ENCODE measurements at regions of chr5 and their contacts with region 1.

Region 1: DNA sequence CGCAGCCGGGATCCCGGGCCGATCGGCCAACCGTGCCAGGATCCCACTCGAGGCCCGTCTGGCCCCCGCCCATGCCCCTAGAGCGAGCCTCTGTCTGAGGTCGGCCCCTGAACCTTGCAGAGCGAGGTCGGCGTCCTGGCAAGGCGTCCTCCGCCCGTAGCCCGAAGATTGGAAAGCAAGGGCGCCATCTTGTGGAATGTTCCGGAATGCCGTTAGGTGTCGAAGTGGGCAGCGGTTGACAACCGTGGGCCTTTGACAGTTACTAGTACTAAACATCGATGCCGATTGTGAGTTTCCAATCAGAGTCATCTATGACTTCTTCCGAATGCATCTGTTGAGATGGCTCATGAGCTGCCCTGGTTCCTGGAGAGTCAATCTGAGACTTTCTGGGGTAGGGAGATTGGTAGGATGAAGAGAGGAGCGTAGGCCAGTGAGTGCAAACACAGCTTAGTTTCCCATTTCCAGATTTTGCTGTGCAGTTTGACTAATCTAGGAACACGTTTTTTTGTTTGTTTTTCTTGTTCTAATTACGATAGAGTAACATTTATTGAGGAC is 923 bp upstream of the PLK2 start:
- DNase-seq: peak; percentile 88 to 95
- ATAC-seq: peak; percentile 84 to 86 (median 85)
- H3K4me3 ChIP-seq: peak overlapping the region; percentile 86
- H3K27ac ChIP-seq: peak overlapping the region; percentile 95
- H3K4me1 ChIP-seq: peaks cover 3% of the 10 kb centered on the region
- H3K27me3 ChIP-seq: no peaks in the 10 kb centered on the region
- CTCF ChIP-seq: peak; percentile 82

Region 2: GRCh38 chr5:56909294-56910209 is 1551.3 kb before region 1 on chr5 and contains the start of gene SETD9:
- intact Hi-C with region 1: loop called in 1 of 2 experiments (anchors 10 kb)
- DNase-seq: peak; percentile 99
- ATAC-seq: peak; percentile 92 to 96 (median 95)
- H3K4me3 ChIP-seq: peak within 1 kb of the TSS; percentile 82
- H3K27ac ChIP-seq: peak within 1 kb of the TSS; percentile 96
- H3K4me1 ChIP-seq: peaks cover 9% of the 10 kb centered on the region
- H3K27me3 ChIP-seq: no peaks in the 10 kb centered on the region
- CTCF ChIP-seq: no peak
- total RNA-seq, gene SETD9: 4.9 to 16.3 (median 11.0) TPM

Region 3: DNA sequence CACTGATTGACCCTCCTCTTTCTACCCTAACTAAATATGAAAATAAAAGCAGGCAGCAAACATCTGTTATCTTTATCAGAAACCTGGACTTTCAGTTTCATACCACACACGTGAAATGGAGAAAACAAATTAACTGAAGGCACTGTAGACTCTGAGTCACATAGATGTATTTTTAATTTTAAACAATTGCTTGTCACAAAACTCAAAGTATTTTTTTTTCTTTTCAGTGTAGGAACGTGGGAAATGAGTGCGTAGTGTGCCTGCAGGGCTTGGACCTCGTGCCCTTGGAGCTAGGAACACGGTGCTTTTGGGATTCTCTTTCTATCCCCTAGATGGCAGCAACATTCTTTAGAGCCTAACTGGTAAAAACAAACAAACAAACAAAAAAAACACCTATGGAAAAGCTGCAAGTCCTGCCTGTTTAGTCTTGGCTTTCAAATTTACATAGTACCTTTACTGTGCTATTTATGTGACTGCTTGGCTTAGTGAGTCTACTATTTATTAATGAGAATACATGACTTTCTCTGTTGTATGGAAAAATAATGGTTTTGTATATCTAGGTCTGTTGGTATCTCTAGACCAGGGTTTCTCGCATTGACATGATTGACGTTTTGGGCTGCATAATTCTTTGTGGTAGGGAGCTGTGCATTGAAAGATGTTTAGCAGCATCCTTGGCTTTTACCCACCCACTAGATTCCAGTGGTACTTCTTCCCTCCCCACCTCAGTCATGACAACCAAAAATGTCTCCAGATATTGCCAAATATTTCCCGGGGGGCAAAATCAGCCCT is 961.4 kb before region 1 on chr5:
- intact Hi-C with region 1: loop called (anchors 1 to 5 kb)
- DNase-seq: no peak
- ATAC-seq: peak; percentile 49 to 83 (median 64)
- H3K4me3 ChIP-seq: peak overlapping the region; percentile 31
- H3K27ac ChIP-seq: no peak overlapping the region
- H3K4me1 ChIP-seq: peaks cover 13% of the 10 kb centered on the region
- H3K27me3 ChIP-seq: no peaks in the 10 kb centered on the region
- CTCF ChIP-seq: peak; percentile 76

Region 4: DNA sequence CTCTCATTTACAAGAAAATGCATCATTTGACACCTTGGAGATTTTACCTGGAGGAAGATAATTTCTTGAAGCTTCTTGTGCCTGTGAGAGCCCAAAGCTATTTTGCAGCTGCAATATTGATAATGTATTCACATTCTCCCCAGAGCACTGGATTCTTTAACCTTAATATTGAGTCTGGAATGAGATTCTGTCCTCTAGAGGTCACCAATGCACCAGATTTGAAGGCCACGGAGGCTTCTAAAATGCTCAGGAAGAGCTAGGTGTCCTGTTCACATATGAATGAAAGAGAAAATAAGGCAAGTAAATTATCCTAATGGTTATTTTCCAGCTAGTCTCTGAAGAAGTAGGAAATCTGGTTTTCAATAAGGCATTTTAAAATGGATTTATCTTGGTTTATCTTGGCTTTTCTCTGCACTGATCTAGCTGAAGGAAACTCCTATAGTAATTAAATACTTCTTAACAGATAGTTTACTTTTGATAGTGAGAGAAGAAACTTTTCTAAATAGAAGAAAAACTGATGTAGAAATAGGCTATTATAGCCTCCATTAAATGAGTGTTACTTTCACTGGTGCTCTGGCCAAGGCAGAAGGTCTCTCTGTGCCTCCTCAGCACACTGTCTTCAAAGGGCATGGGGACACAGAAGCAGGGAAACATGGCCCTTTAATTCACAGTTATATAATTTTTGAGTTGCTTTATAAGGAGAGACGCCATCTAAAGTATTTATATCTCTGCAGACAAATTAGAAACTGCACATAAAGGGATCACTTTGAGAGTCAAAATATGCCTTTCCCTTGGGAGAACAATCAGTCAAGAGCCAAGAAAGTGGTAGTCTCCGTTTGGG is 681.2 kb before region 1 on chr5:
- intact Hi-C with region 1: loop called (anchors 1 to 2 kb)
- DNase-seq: no peak
- ATAC-seq: peak; percentile 82 to 92 (median 83)
- H3K4me3 ChIP-seq: no peak overlapping the region
- H3K27ac ChIP-seq: no peak overlapping the region
- H3K4me1 ChIP-seq: peaks cover 23% of the 10 kb centered on the region
- H3K27me3 ChIP-seq: no peaks in the 10 kb centered on the region
- CTCF ChIP-seq: peak; percentile 70

Region 5: DNA sequence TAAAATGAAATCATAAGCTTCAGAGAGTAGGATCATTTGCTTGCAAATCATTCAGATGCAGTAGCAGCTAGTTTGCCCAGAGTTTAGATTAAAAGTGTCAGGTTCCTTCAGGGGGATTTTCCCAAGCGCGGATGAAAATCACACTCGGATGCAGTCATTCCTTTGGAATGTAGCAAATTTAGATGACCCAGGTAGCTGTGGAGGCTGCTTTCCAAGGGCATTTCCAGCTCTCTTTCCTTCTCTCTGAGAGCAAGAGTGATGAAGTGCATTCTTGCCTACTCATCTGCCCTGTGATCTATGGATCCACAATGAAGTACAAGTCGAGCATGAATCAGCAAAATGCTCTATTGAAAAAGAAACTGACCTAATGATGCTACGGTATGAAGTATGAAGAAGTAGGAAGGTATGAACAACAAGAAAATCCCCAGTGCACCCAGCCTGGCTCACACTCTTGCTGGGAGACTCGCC is 201.1 kb before region 1 on chr5:
- intact Hi-C with region 1: loop called (anchors 10 kb)
- DNase-seq: no peak
- ATAC-seq: peak in 2 of 4 donors; percentile 59 to 73
- H3K4me3 ChIP-seq: no peak overlapping the region
- H3K27ac ChIP-seq: peak overlapping the region; percentile 5
- H3K4me1 ChIP-seq: peaks cover 5% of the 10 kb centered on the region
- H3K27me3 ChIP-seq: no peaks in the 10 kb centered on the region
- CTCF ChIP-seq: no peak